ENCODE measurements at regions of chr3 and their contacts with region 1.

Region 1: DNA sequence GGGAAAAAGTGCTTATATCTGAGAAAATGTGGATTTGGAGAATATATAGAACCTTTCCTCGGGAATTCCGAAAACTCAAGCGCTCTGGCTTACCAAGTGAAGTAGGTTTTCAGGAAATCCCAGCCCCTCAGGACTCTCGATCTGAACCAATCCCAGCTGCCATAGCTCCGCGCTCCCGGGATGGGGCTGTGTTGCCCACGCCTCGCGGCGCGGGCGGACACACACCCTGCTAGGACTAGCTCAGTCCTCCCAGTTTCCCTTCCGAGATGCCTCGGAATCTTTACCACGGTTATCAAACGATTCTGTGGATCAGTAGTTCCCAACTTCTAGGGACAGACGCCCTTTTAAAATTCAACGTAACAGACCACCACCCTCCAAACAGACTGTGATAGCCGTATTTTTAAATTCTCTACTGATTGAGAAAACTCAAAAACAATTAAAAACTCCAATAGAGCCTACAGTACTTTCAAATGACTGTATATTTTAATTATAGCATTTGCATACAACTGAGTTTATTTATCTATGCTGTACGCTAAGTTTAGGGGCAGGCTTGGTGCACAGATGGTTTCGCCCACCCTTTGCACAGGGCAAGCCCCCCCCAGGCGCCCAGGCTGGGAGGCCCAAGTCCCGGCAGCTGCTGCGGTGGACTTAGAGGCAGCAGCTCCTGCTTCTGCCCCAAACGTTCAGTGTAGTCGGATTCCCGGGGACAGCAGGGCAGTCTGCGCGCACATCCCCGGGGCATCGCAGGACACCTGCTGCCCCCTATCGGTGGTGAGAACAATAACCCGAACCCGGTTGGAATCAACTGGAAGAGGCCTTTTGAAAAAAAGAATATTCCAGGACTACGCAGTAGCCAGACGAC is 52.3 kb downstream of the CCDC54 start:
- DNase-seq: peak in 33 of 35 experiments; percentile 6 to 75 (median 36)
- ATAC-seq: peak; percentile 26 to 68 (median 47)
- H3K4me3 ChIP-seq: peak overlapping the region; percentile 73 to 85
- H3K4me3 Mint-ChIP-seq: peak overlapping the region; percentile 77 to 88 (median 86)
- H3K27ac ChIP-seq: no peak overlapping the region
- H3K27ac Mint-ChIP-seq: peak overlapping the region in 1 of 2 donors; percentile 66
- H3K4me1 ChIP-seq: peaks cover 5 to 23% of the 10 kb centered on the region in 2 experiments
- H3K4me1 Mint-ChIP-seq: peaks cover 19 to 26% (median 21%) of the 10 kb centered on the region in 3 donors
- H3K27me3 ChIP-seq: peaks cover 0 to 16% of the 10 kb centered on the region in 2 experiments
- H3K27me3 Mint-ChIP-seq: peaks cover 0 to 2% of the 10 kb centered on the region in 2 donors

Region 2: GRCh38 chr3:107441617-107442016 is 12.1 kb after region 1 on chr3:
- CTCF ChIA-PET with region 1: interaction called in 1 of 2 experiments, 13 read pairs
- POLR2A ChIA-PET with region 1: no interaction called
- DNase-seq: no peak
- ATAC-seq: no peak
- H3K4me3 ChIP-seq: no peak overlapping the region
- H3K4me3 Mint-ChIP-seq: no peak overlapping the region
- H3K27ac ChIP-seq: no peak overlapping the region
- H3K27ac Mint-ChIP-seq: no peak overlapping the region
- H3K4me1 ChIP-seq: no peaks in the 10 kb centered on the region
- H3K4me1 Mint-ChIP-seq: no peaks in the 10 kb centered on the region
- H3K27me3 ChIP-seq: peaks cover 0 to 9% of the 10 kb centered on the region in 2 experiments
- H3K27me3 Mint-ChIP-seq: peaks cover 3% of the 10 kb centered on the region in 2 donors

Region 3: GRCh38 chr3:107465064-107465631 is 35.6 kb after region 1 on chr3:
- CTCF ChIA-PET with region 1: no interaction called
- POLR2A ChIA-PET with region 1: no interaction called
- DNase-seq: no peak
- ATAC-seq: no peak
- H3K4me3 ChIP-seq: no peak overlapping the region
- H3K4me3 Mint-ChIP-seq: no peak overlapping the region
- H3K27ac ChIP-seq: no peak overlapping the region
- H3K27ac Mint-ChIP-seq: no peak overlapping the region
- H3K4me1 ChIP-seq: no peaks in the 10 kb centered on the region
- H3K4me1 Mint-ChIP-seq: no peaks in the 10 kb centered on the region
- H3K27me3 ChIP-seq: peaks cover 0 to 2% of the 10 kb centered on the region in 2 experiments
- H3K27me3 Mint-ChIP-seq: peaks cover 17% of the 10 kb centered on the region in 2 donors